Colonic mucosa (tissue), 4 donors: ENCODE measurements at regions of chr2 and their contacts with region 1.

Region 1: DNA sequence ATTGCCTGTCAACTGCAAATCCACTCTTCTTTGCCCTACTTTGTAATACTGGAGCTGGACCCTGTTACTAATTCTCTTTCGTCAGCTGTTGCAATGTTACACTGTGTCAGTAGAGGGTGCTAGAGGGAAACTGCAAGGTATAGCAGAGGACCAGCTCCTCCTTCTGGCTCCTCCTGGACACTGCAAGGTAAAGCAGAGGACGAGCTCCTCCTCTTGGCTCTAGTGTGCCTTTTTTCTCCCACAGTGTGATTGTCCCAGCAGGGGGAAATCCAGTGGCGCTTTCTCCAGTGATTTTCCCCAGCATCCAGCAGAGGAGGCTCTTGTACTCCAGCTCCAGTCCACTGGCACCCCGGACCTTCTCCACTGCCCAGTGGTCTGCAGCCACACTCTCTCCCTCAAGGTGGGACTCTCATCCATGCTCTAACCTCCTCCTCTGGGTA is 95.6 kb downstream of the CAPN13 start:
- DNase-seq: peak; percentile 94
- H3K4me3 ChIP-seq: no peak overlapping the region
- H3K27ac ChIP-seq: no peak overlapping the region
- H3K4me1 ChIP-seq: no peaks in the 10 kb centered on the region
- H3K27me3 ChIP-seq: no peaks in the 10 kb centered on the region
- CTCF ChIP-seq: peak; percentile 99

Region 2: DNA sequence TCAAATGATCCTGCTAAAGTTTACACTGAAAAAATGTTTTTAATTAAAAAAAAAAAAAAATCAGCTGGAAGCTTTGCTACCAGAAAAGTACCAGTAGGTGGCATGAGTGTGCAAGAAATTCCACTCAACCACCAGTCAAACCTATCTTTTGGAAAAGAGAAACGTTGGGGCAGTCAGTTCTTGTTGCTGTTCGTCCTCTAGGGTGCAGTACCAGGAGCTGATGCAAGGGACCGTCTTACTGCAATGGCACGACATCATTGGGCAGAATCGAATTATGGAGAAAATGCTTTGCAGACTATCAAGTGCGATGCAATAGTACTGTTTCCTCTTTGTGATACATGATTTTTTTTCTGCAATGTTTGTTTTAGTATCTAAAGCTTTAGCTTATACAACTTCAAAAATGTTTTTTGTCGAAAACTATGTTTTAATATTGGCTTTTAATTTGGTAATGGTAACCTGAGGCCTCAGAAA is 546.6 kb before region 1 on chr2:
- intact Hi-C with region 1: loop called (anchors 2 kb)
- DNase-seq: peak; percentile 70
- H3K4me3 ChIP-seq: no peak overlapping the region
- H3K27ac ChIP-seq: no peak overlapping the region
- H3K4me1 ChIP-seq: no peaks in the 10 kb centered on the region
- H3K27me3 ChIP-seq: no peaks in the 10 kb centered on the region
- CTCF ChIP-seq: peak; percentile 90

Region 3: GRCh38 chr2:30410217-30410616 is 301.4 kb before region 1 on chr2:
- intact Hi-C with region 1: no loop called
- DNase-seq: no peak
- H3K4me3 ChIP-seq: no peak overlapping the region
- H3K27ac ChIP-seq: no peak overlapping the region
- H3K4me1 ChIP-seq: no peaks in the 10 kb centered on the region
- H3K27me3 ChIP-seq: no peaks in the 10 kb centered on the region
- CTCF ChIP-seq: no peak

Region 4: GRCh38 chr2:30421604-30422443 is 289.8 kb before region 1 on chr2:
- intact Hi-C with region 1: no loop called
- DNase-seq: no peak
- H3K4me3 ChIP-seq: no peak overlapping the region
- H3K27ac ChIP-seq: peak overlapping the region; percentile 8
- H3K4me1 ChIP-seq: peaks cover 4% of the 10 kb centered on the region
- H3K27me3 ChIP-seq: no peaks in the 10 kb centered on the region
- CTCF ChIP-seq: no peak

Region 5: DNA sequence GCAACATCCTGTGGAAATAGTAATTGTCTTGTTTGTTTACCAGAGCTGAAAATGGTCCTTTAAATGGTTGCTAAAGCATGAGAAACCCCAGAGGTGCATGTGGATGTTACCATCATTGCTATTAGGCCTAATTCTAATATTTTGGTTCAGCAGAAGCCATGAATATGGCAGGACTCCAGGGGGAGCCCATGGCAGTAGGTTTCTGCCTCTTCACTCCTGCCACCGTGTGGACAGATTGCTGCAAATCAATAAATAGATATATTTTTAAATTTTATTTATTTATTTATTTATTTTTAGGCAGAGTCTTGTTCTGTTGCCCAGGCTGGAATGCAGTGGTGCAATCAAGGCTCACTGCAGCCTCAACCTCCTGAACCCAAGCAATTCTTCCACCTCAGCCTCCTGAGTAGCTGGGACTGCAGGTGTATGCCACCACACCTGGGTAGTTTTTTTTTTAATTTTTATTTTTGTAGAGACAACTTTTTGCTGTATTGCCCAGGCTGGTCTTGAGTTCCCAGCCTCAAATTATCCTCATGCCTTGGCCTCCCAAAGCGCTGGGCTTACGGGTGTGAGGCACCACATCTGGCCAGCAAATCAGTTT is 150.5 kb after region 1 on chr2:
- intact Hi-C with region 1: loop called (anchors 2 kb)
- DNase-seq: peak; percentile 58
- H3K4me3 ChIP-seq: no peak overlapping the region
- H3K27ac ChIP-seq: no peak overlapping the region
- H3K4me1 ChIP-seq: no peaks in the 10 kb centered on the region
- H3K27me3 ChIP-seq: no peaks in the 10 kb centered on the region
- CTCF ChIP-seq: peak; percentile 75

Region 6: DNA sequence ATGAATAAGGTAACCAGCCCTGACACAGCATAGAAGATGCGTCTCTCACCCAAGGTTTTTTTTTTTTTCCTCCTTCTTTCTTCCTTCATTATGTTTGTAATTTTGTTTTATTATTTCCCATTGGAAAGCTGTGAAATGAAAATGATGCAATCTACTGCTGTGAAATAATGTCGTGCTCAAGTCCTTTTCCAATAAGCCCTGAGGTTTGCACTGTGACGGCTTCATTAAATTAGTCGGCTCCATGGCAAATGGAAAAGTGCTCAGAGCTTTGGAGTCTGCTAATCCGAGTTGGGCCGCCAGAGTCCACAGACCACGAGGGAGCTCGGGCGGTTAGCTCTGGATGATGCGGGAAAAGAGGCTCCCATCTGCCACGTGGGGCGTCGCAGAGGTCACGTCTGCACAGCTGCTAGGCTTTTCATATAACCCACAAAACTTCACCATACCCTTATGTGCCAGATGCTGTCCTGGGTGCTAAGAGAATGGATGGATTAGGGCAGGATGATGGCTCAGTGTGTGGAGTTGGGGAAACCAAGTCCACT is 187.9 kb after region 1 on chr2:
- intact Hi-C with region 1: no loop called
- DNase-seq: no peak
- H3K4me3 ChIP-seq: no peak overlapping the region
- H3K27ac ChIP-seq: no peak overlapping the region
- H3K4me1 ChIP-seq: no peaks in the 10 kb centered on the region
- H3K27me3 ChIP-seq: no peaks in the 10 kb centered on the region
- CTCF ChIP-seq: no peak

Region 7: GRCh38 chr2:31333527-31334183 is 622.0 kb after region 1 on chr2:
- intact Hi-C with region 1: loop called (anchors 5 kb)
- DNase-seq: peak; percentile 82
- H3K4me3 ChIP-seq: no peak overlapping the region
- H3K27ac ChIP-seq: no peak overlapping the region
- H3K4me1 ChIP-seq: no peaks in the 10 kb centered on the region
- H3K27me3 ChIP-seq: no peaks in the 10 kb centered on the region
- CTCF ChIP-seq: peak; percentile 90